Caco-2 (cell line): ENCODE measurements at regions of chr6 and their contacts with region 1.

Region 1: GRCh38 chr6:52598123-52598823 is 21.4 kb upstream of the TRAM2 start:
- DNase-seq: peak; percentile 83 to 85
- H3K4me3 ChIP-seq: no peak overlapping the region
- H3K4me3 Mint-ChIP-seq: peak overlapping the region; percentile 56
- H3K27ac Mint-ChIP-seq: peak overlapping the region; percentile 80
- H3K4me1 ChIP-seq: peaks cover 18% of the 10 kb centered on the region
- H3K4me1 Mint-ChIP-seq: peaks cover 26% of the 10 kb centered on the region
- H3K27me3 ChIP-seq: no peaks in the 10 kb centered on the region
- H3K27me3 Mint-ChIP-seq: no peaks in the 10 kb centered on the region
- CTCF ChIP-seq: peak; percentile 70 to 81

Region 2: DNA sequence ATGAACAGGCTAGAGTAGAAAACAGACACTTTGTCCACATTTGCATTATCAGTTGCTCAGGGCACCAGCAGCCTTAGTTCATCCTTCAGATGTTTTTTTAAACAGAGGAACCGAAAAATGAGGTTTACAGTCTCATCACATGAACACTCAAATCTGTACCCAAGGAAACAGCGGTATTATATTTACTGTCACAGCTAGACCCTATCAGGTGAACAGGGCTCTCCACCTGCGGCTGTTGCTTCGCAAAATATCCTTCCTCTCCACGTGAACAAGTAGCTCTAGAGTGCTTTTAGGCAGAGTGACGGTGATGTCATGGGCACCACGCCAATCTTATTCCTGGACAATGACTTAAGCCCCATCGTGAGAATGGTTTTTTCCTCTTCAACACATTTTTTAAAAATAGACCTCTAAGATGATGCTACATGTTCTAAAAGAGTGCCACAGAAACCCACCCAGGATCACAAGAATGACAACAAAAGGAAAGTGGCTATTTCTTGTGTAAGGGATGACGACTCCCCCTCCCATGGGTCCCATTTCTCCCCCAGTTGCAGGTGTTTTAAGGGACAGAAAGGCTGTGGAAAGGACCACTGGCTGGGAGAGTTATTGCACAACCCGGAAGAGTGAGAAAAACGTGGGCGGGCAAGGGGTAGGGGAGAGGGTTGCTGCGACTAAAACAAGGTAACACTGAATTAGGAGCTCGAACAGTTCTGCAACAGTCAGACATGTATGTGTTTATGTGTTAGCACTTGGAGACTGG is 100.4 kb before region 1 on chr6:
- CTCF ChIA-PET with region 1: no interaction called
- POLR2A ChIA-PET with region 1: no interaction called
- intact Hi-C with region 1: loop called (anchors 5 kb)
- DNase-seq: no peak
- H3K4me3 ChIP-seq: no peak overlapping the region
- H3K4me3 Mint-ChIP-seq: no peak overlapping the region
- H3K27ac Mint-ChIP-seq: no peak overlapping the region
- H3K4me1 ChIP-seq: no peaks in the 10 kb centered on the region
- H3K4me1 Mint-ChIP-seq: no peaks in the 10 kb centered on the region
- H3K27me3 ChIP-seq: no peaks in the 10 kb centered on the region
- H3K27me3 Mint-ChIP-seq: no peaks in the 10 kb centered on the region
- CTCF ChIP-seq: no peak

Region 3: GRCh38 chr6:52653151-52653550 is 54.9 kb after region 1 on chr6:
- CTCF ChIA-PET with region 1: interaction called, 4 read pairs
- POLR2A ChIA-PET with region 1: interaction called, 4 read pairs
- intact Hi-C with region 1: loop called (anchors 2 kb)
- DNase-seq: no peak
- H3K4me3 ChIP-seq: no peak overlapping the region
- H3K4me3 Mint-ChIP-seq: no peak overlapping the region
- H3K27ac Mint-ChIP-seq: no peak overlapping the region
- H3K4me1 ChIP-seq: no peaks in the 10 kb centered on the region
- H3K4me1 Mint-ChIP-seq: peaks cover 7% of the 10 kb centered on the region
- H3K27me3 ChIP-seq: no peaks in the 10 kb centered on the region
- H3K27me3 Mint-ChIP-seq: no peaks in the 10 kb centered on the region
- CTCF ChIP-seq: no peak